ENCODE measurements at regions of chr3 and their contacts with region 1.

Region 1: GRCh38 chr3:36777424-36778218 is 13.3 kb upstream of the DCLK3 start:
- DNase-seq: no peak
- ATAC-seq: no peak
- H3K4me3 ChIP-seq: no peak overlapping the region
- H3K27ac ChIP-seq: no peak overlapping the region
- H3K4me1 ChIP-seq: no peaks in the 10 kb centered on the region
- H3K27me3 ChIP-seq: no peaks in the 10 kb centered on the region
- CTCF ChIP-seq: no peak

Region 2: GRCh38 chr3:36269274-36269673 is 508.3 kb before region 1 on chr3:
- intact Hi-C with region 1: no loop called
- DNase-seq: no peak
- ATAC-seq: no peak
- H3K4me3 ChIP-seq: no peak overlapping the region
- H3K27ac ChIP-seq: no peak overlapping the region
- H3K4me1 ChIP-seq: no peaks in the 10 kb centered on the region
- H3K27me3 ChIP-seq: no peaks in the 10 kb centered on the region
- CTCF ChIP-seq: no peak

Region 3: DNA sequence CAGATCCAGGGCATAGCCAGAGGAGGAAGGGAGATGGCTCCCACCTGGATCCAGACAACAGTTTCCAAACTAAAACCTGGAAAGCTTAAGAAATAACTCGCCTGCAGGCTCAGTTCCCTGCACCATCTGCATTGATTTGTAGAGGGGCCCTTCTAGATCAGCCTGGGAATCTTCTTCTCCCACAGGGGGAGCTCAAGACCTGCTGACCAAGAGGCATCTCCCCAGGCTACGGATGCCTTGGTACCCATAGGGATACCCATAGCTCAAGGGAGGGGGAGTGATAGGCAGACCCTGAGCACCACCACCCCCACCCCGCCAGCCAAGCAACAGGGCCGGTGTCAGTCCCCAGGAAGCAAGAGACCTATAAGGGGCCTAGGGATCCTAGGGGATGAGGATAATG is 14.7 kb after region 1 on chr3:
- intact Hi-C with region 1: no loop called
- DNase-seq: no peak
- ATAC-seq: no peak
- H3K4me3 ChIP-seq: no peak overlapping the region
- H3K27ac ChIP-seq: no peak overlapping the region
- H3K4me1 ChIP-seq: no peaks in the 10 kb centered on the region
- H3K27me3 ChIP-seq: no peaks in the 10 kb centered on the region
- CTCF ChIP-seq: no peak

Region 4: DNA sequence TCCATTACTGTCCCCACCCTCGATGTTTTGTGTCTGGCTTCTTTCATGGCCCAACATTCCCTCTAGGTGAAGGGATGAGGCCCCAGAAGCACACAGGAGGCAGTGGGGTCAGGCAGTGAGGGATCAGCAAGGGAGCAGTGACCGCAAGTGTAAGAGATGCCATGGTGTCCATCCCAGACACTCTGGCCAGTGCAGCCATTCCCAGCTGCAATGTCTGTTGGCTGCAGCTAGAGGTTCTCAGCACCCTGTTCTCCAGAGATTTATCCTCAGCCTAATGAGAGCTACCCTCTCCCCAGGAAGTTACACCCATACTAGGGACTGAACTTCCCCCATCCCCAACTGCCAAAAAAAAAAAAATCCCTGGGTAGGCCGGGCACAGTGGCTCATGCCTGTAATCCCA is 127.0 kb after region 1 on chr3:
- intact Hi-C with region 1: no loop called
- DNase-seq: no peak
- ATAC-seq: peak in 1 of 4 donors; percentile 40
- H3K4me3 ChIP-seq: no peak overlapping the region
- H3K27ac ChIP-seq: no peak overlapping the region
- H3K4me1 ChIP-seq: no peaks in the 10 kb centered on the region
- H3K27me3 ChIP-seq: no peaks in the 10 kb centered on the region
- CTCF ChIP-seq: no peak

Region 5: DNA sequence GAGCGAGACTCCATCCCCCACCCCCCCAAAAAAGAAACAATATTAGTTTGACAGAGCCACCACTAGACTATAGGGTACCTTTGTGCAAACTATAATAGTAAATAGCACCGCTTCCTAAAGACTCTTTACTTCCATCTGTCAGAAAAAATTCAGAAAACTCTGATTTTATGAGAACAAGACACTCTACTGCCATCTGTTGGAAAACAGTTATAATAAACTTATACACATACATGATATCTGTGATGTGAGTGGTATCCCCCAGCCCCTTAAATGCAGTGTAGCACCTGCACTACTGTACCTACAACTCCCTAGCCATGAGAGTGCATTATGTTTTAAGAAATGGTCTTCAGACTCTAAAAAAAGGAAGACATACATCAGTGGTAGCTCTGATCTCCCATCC is 1036.9 kb after region 1 on chr3:
- intact Hi-C with region 1: loop called in 1 of 2 experiments (anchors 5 kb)
- DNase-seq: no peak
- ATAC-seq: no peak
- H3K4me3 ChIP-seq: no peak overlapping the region
- H3K27ac ChIP-seq: no peak overlapping the region
- H3K4me1 ChIP-seq: peaks cover 8% of the 10 kb centered on the region
- H3K27me3 ChIP-seq: no peaks in the 10 kb centered on the region
- CTCF ChIP-seq: no peak